Activated CD8-positive, alpha-beta memory T cell treated with anti-CD3 and anti-CD28 coated beads, Interleukin-2, amount 10 ng/mL, durations not matched to agents 7 days and 5 days (primary cell): ENCODE measurements at regions of chr15 and their contacts with region 1.

Region 1: DNA sequence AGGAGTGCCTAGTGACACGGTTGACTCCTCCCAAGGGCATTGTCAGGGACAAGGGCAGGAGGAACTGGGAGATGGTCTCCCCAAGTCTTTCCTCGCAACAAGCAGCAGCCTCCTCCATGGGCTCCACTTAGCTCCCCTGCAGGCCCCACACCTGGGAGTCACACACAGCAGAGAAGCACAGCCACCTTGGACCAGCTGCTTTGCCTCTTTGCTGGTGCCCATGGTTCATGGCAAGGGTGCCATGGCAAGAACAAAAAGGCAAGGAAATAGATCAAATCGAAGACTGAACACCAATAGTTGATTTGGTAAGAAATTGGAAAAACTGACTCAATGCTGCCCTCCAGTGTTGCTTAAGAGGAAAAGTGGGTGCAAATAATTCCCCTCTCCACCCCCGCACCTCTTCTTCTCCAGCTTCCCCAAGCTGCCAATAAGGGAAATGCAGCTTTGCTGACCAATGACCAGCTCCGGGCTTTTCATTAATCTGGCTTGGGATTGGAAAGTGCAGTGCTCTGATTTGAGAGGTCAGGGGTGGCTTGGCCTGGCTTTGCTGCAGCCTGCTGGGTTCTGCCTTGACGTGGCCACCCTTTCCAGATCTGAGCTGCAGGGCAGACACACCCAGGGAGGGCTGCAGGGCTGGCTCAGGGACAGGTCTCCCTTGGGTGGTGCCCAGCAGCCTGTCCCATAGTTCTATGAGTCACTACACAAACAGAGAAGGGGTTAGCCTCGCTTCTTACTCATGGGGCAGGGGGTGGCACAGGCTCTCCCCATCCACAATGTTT is 162.0 kb downstream of the KLF13 start:
- DNase-seq: peak; percentile 63
- ATAC-seq: peak; percentile 52
- H3K4me3 Mint-ChIP-seq: peak overlapping the region; percentile 15
- H3K27ac Mint-ChIP-seq: peak overlapping the region; percentile 72
- H3K4me1 Mint-ChIP-seq: peaks cover 70% of the 10 kb centered on the region
- H3K27me3 Mint-ChIP-seq: no peaks in the 10 kb centered on the region

Region 2: DNA sequence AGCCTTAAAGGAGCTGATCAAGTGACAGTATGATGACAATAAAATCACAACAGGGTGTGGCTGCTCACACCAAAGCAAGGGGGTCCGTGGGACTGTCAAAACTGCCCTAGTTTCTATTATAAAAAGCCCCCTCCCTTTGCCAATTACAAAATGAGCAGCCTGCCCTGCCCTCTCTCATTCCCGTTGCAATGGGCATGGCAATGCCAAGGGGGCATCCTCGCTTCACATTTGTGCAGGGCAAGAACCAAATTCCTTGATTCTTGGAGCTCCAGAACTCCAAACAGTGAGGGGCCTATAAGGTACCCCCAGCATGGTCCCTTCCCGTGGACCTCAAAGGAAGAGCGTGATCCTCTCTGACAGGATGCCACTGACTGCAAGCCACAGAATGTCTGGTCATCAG is 282.2 kb before region 1 on chr15:
- CTCF ChIA-PET with region 1: interaction called, 50 read pairs
- DNase-seq: no peak
- ATAC-seq: no peak
- H3K4me3 Mint-ChIP-seq: no peak overlapping the region
- H3K27ac Mint-ChIP-seq: no peak overlapping the region
- H3K4me1 Mint-ChIP-seq: peaks cover 24% of the 10 kb centered on the region
- H3K27me3 Mint-ChIP-seq: no peaks in the 10 kb centered on the region

Region 3: GRCh38 chr15:31265871-31266711 is 222.5 kb before region 1 on chr15:
- CTCF ChIA-PET with region 1: interaction called, 15 read pairs
- DNase-seq: peak; percentile 89
- ATAC-seq: peak; percentile 75
- H3K4me3 Mint-ChIP-seq: peak overlapping the region; percentile 15
- H3K27ac Mint-ChIP-seq: peak overlapping the region; percentile 94
- H3K4me1 Mint-ChIP-seq: peaks cover 73% of the 10 kb centered on the region
- H3K27me3 Mint-ChIP-seq: no peaks in the 10 kb centered on the region

Region 4: GRCh38 chr15:31365655-31366127 is 122.9 kb before region 1 on chr15:
- CTCF ChIA-PET with region 1: interaction called, 65 read pairs
- DNase-seq: peak; percentile 93
- ATAC-seq: peak; percentile 66
- H3K4me3 Mint-ChIP-seq: peak overlapping the region; percentile 58
- H3K27ac Mint-ChIP-seq: peak overlapping the region; percentile 100
- H3K4me1 Mint-ChIP-seq: peaks cover 100% of the 10 kb centered on the region
- H3K27me3 Mint-ChIP-seq: no peaks in the 10 kb centered on the region

Region 5: GRCh38 chr15:31458591-31459399 is 29.8 kb before region 1 on chr15:
- CTCF ChIA-PET with region 1: interaction called, 13 read pairs
- DNase-seq: no peak
- ATAC-seq: peak; percentile 33
- H3K4me3 Mint-ChIP-seq: no peak overlapping the region
- H3K27ac Mint-ChIP-seq: no peak overlapping the region
- H3K4me1 Mint-ChIP-seq: peaks cover 25% of the 10 kb centered on the region
- H3K27me3 Mint-ChIP-seq: no peaks in the 10 kb centered on the region

Region 6: GRCh38 chr15:31824024-31824423 is 335.4 kb after region 1 on chr15:
- CTCF ChIA-PET with region 1: no interaction called
- DNase-seq: no peak
- ATAC-seq: no peak
- H3K4me3 Mint-ChIP-seq: no peak overlapping the region
- H3K27ac Mint-ChIP-seq: no peak overlapping the region
- H3K4me1 Mint-ChIP-seq: no peaks in the 10 kb centered on the region
- H3K27me3 Mint-ChIP-seq: peaks cover 13% of the 10 kb centered on the region